Activated CD4-positive, alpha-beta T cell treated with anti-CD3 and anti-CD28 coated beads, Interleukin-2, amount 10 ng/mL, durations not matched to agents 7 days and 5 days (primary cell): ENCODE measurements at regions of chr2 and their contacts with region 1.

Region 1: DNA sequence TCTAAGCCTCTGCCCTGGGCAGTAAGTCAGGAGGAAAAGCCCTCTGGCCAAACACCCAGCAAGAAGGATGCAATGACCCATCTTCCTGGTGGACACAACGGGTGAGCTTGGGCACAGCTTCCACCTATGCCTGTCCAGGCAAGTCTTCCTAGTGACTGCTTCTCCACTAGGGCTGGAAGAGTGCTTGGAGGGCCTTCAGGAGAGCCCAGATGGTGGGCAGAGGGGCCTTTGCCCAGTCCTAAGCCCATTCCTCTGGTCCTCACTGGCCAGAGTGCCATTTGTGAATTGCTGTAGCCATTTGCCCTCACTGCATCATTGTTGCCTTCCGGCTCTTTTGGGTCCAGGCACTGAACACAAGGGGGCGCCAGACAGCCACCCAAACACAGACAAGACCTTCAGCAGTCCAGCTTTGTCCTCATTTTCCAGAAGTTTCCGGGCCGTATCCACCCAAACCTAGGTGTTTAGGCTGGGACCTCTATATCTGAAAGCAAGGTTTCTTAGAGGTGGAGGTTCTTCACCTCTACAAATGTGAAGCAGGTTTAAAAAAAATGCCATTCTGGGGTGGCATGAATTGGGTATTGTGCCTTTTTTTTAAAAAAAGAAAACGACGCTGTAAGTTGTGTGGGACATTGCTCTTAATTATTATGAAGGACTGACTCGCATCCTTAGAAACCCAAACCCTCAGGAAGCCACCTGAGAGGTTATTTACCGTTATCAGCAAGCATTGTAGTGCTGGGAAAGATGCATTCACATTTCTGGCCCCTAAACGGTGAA is 29.5 kb downstream of the PAX8 start:
- DNase-seq: peak; percentile 82
- H3K4me3 Mint-ChIP-seq: no peak overlapping the region
- H3K27ac Mint-ChIP-seq: peak overlapping the region; percentile 85
- H3K4me1 Mint-ChIP-seq: peaks cover 55% of the 10 kb centered on the region
- H3K27me3 Mint-ChIP-seq: peaks cover 2% of the 10 kb centered on the region

Region 2: DNA sequence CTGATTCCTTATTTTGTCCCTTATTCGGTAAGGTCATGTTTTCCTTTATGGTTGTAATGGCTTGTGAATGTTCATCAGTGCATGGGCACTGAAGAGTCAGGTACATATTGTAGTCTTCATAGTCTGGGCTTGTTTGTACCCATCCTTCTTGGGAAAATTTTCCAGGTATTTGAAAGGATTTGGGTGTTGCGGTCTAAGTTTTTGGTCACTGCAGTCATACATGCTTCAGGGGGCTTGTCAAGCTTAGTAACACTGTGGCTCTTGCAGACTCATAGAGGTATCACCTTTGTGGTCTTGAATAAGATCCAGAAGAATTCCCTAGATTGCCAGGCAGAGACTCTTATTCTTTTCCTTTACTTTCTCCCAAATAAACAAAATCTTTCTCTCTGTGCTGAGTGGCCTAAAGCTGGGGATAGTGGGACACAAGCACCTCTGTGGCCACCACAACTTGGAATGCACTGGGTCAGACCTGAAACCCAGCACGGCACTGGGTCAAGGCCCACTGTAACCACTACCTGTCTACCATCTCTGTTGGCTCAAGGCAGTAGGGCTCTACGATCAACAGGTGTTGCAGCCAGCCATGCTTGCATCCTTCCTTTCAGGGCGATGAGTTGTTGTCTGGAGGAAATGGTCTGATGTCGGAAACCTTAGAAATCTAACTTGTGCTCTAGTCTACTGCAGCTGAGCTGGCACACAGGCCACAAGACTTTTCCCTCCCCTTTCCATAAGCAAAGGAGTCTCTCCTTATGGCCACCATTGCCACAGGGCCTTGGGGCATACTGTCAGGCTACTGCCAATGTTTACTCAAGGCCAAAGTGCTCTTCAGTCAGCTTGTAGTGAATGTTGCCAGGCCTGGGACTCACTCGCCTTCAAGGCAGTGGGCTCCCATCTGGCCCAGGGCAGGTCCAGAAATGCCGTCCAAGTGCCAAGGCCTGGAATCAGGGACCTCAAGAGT is 100.3 kb before region 1 on chr2:
- CTCF ChIA-PET with region 1: no interaction called
- POLR2A ChIA-PET with region 1: no interaction called
- DNase-seq: no peak
- H3K4me3 Mint-ChIP-seq: no peak overlapping the region
- H3K27ac Mint-ChIP-seq: no peak overlapping the region
- H3K4me1 Mint-ChIP-seq: peaks cover 4% of the 10 kb centered on the region
- H3K27me3 Mint-ChIP-seq: peaks cover 18% of the 10 kb centered on the region

Region 3: GRCh38 chr2:113203901-113204519 is 45.2 kb before region 1 on chr2:
- CTCF ChIA-PET with region 1: interaction called, 11 read pairs
- POLR2A ChIA-PET with region 1: no interaction called
- DNase-seq: peak; percentile 80
- H3K4me3 Mint-ChIP-seq: no peak overlapping the region
- H3K27ac Mint-ChIP-seq: peak overlapping the region; percentile 65
- H3K4me1 Mint-ChIP-seq: peaks cover 12% of the 10 kb centered on the region
- H3K27me3 Mint-ChIP-seq: no peaks in the 10 kb centered on the region

Region 4: DNA sequence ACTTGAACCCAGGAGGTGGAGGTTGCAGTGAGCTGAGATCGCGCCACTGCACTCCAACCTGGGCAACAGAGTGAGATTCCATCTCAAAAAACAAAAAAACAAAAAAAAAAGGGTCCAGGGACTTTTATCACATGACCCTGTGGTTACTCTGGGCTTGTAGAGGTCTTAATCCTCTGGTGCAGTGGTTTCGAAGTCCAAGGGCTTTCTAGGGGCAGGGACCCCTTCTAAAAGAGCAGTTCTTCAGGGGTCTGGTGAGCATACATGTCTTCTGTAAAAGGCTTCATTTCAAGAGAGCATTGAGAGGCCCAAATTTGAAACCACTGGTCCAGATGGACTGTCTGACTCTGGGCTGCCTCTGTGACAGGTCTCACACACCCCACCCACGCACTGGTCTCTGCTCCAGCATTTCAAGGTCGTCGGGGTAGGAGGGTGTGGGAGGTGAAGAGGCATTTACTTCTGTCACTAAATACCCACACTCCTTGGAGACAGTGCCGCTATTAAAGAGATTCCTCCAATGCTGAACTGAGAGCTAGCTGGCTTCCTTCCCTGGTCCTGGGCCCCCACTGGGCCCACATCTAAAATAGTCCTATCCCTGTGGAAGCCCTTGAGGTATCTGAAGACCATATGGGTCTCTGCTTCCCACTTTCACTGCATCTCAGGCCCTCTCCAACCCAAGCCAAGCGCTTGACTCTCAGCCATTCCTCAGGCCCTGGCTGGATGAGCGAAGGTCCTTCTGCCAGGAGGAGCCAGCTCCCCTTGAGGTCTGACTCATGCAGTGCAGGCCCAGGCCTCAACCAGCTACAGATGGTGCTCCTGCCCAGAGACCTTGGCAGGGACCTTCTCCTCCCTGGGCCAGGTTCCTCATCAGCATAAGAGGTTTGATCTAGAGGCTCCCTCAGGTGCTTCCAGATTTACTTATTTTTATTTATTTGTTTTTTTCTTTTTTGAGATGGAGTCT is 15.3 kb before region 1 on chr2:
- CTCF ChIA-PET with region 1: interaction called, 22 read pairs
- POLR2A ChIA-PET with region 1: no interaction called
- DNase-seq: no peak
- H3K4me3 Mint-ChIP-seq: no peak overlapping the region
- H3K27ac Mint-ChIP-seq: no peak overlapping the region
- H3K4me1 Mint-ChIP-seq: peaks cover 32% of the 10 kb centered on the region
- H3K27me3 Mint-ChIP-seq: no peaks in the 10 kb centered on the region